OCI-LY7 (cell line): ENCODE measurements at regions of chr15 and their contacts with region 1.

Region 1: GRCh38 chr15:38699633-38700230 is 135.1 kb upstream of the RASGRP1 start:
- DNase-seq: peak; percentile 82
- H3K4me3 ChIP-seq: no peak overlapping the region
- H3K27ac ChIP-seq: no peak overlapping the region
- H3K4me1 ChIP-seq: no peaks in the 10 kb centered on the region
- CTCF ChIP-seq: peak; percentile 99

Region 2: GRCh38 chr15:38440353-38441129 is 259.2 kb before region 1 on chr15:
- CTCF ChIA-PET with region 1: interaction called, 26 read pairs
- POLR2A ChIA-PET with region 1: interaction called, 3 read pairs
- intact Hi-C with region 1: loop called (anchors 1 kb)
- DNase-seq: peak; percentile 70
- H3K4me3 ChIP-seq: no peak overlapping the region
- H3K27ac ChIP-seq: no peak overlapping the region
- H3K4me1 ChIP-seq: peaks cover 3% of the 10 kb centered on the region
- CTCF ChIP-seq: peak; percentile 98

Region 3: DNA sequence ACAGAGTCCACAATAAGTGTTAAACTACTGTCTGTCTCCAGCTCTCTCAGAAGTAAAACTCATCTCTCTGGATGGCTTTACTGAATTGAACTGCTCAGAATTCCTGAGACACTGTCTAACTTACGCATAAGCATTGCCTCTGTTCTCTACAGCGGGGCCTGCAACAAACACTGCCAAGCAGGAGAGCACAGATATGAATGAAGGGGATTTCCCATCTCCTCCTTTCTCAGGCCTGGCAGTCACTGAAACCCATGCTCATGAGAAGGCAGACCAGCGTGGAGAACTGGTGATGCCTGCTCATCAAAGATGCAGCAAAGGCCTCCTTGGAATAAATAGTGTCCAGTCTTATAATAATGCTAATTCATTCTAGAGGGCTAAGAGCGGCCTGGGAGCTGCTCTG is 145.4 kb before region 1 on chr15:
- CTCF ChIA-PET with region 1: interaction called, 3 read pairs
- POLR2A ChIA-PET with region 1: no interaction called
- intact Hi-C with region 1: loop called (anchors 5 kb)
- DNase-seq: no peak
- H3K4me3 ChIP-seq: no peak overlapping the region
- H3K27ac ChIP-seq: no peak overlapping the region
- H3K4me1 ChIP-seq: no peaks in the 10 kb centered on the region
- CTCF ChIP-seq: no peak

Region 4: GRCh38 chr15:38817427-38818156 is 117.9 kb after region 1 on chr15:
- CTCF ChIA-PET with region 1: no interaction called
- POLR2A ChIA-PET with region 1: no interaction called
- intact Hi-C with region 1: loop called (anchors 10 kb)
- DNase-seq: peak; percentile 70
- H3K4me3 ChIP-seq: no peak overlapping the region
- H3K27ac ChIP-seq: no peak overlapping the region
- H3K4me1 ChIP-seq: no peaks in the 10 kb centered on the region
- CTCF ChIP-seq: peak; percentile 99